ENCODE measurements at regions of chr17 and their contacts with region 1.

Region 1: GRCh38 chr17:44350733-44351226 is 5.7 kb downstream of the GRN start:
- DNase-seq: peak; percentile 55 to 82 (median 77)
- ATAC-seq: peak; percentile 80
- H3K4me3 ChIP-seq: no peak overlapping the region
- H3K4me3 Mint-ChIP-seq: no peak overlapping the region
- H3K27ac ChIP-seq: no peak overlapping the region
- H3K27ac Mint-ChIP-seq: no peak overlapping the region
- H3K4me1 ChIP-seq: peaks cover 11% of the 10 kb centered on the region
- H3K4me1 Mint-ChIP-seq: peaks cover 14% of the 10 kb centered on the region
- H3K27me3 ChIP-seq: no peaks in the 10 kb centered on the region
- H3K27me3 Mint-ChIP-seq: no peaks in the 10 kb centered on the region
- CTCF ChIP-seq: peak; percentile 72

Region 2: GRCh38 chr17:43377056-43377810 is 973.5 kb before region 1 on chr17:
- CTCF ChIA-PET with region 1: no interaction called
- POLR2A ChIA-PET with region 1: no interaction called
- intact Hi-C with region 1: no loop called
- DNase-seq: no peak
- ATAC-seq: no peak
- H3K4me3 ChIP-seq: no peak overlapping the region
- H3K4me3 Mint-ChIP-seq: no peak overlapping the region
- H3K27ac ChIP-seq: no peak overlapping the region
- H3K27ac Mint-ChIP-seq: no peak overlapping the region
- H3K4me1 ChIP-seq: no peaks in the 10 kb centered on the region
- H3K4me1 Mint-ChIP-seq: peaks cover 1% of the 10 kb centered on the region
- H3K27me3 ChIP-seq: no peaks in the 10 kb centered on the region
- H3K27me3 Mint-ChIP-seq: no peaks in the 10 kb centered on the region
- CTCF ChIP-seq: no peak

Region 3: GRCh38 chr17:43673516-43674323 is 677.1 kb before region 1 on chr17:
- CTCF ChIA-PET with region 1: no interaction called
- POLR2A ChIA-PET with region 1: no interaction called
- intact Hi-C with region 1: no loop called
- DNase-seq: peak; percentile 53 to 79 (median 72)
- ATAC-seq: peak; percentile 76
- H3K4me3 ChIP-seq: no peak overlapping the region
- H3K4me3 Mint-ChIP-seq: no peak overlapping the region
- H3K27ac ChIP-seq: no peak overlapping the region
- H3K27ac Mint-ChIP-seq: no peak overlapping the region
- H3K4me1 ChIP-seq: peaks cover 9% of the 10 kb centered on the region
- H3K4me1 Mint-ChIP-seq: peaks cover 11% of the 10 kb centered on the region
- H3K27me3 ChIP-seq: no peaks in the 10 kb centered on the region
- H3K27me3 Mint-ChIP-seq: peaks cover 2% of the 10 kb centered on the region
- CTCF ChIP-seq: peak; percentile 86

Region 4: GRCh38 chr17:43940630-43941029 is 410.1 kb before region 1 on chr17:
- CTCF ChIA-PET with region 1: interaction called, 4 read pairs
- POLR2A ChIA-PET with region 1: no interaction called
- intact Hi-C with region 1: loop called in 1 of 2 experiments (anchors 10 kb)
- DNase-seq: peak in 2 of 9 experiments; percentile 24 to 32
- ATAC-seq: no peak
- H3K4me3 ChIP-seq: no peak overlapping the region
- H3K4me3 Mint-ChIP-seq: no peak overlapping the region
- H3K27ac ChIP-seq: no peak overlapping the region
- H3K27ac Mint-ChIP-seq: no peak overlapping the region
- H3K4me1 ChIP-seq: peaks cover 12% of the 10 kb centered on the region
- H3K4me1 Mint-ChIP-seq: peaks cover 14% of the 10 kb centered on the region
- H3K27me3 ChIP-seq: no peaks in the 10 kb centered on the region
- H3K27me3 Mint-ChIP-seq: peaks cover 4% of the 10 kb centered on the region
- CTCF ChIP-seq: no peak

Region 5: DNA sequence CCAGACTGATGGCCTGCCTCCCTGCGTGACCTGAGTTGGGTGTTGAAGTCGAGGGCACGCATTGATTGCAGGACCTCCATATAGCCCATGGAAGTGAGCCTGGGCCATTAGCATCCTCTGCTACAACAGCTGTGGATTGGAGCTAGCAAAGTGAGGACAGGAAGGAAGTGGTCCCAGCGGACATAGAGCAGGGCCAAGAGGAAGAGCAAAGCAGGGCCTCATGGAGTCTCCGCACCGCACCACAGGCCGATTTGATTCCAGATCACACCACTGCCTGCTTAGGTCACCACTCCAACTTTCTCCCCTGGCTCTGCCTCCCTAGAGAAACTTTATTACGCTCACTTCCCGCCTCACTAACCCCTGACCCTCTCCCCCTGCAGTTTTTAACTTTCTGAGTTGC is 120.6 kb before region 1 on chr17:
- CTCF ChIA-PET with region 1: no interaction called
- POLR2A ChIA-PET with region 1: no interaction called
- intact Hi-C with region 1: no loop called
- DNase-seq: no peak
- ATAC-seq: no peak
- H3K4me3 ChIP-seq: no peak overlapping the region
- H3K4me3 Mint-ChIP-seq: no peak overlapping the region
- H3K27ac ChIP-seq: no peak overlapping the region
- H3K27ac Mint-ChIP-seq: no peak overlapping the region
- H3K4me1 ChIP-seq: no peaks in the 10 kb centered on the region
- H3K4me1 Mint-ChIP-seq: peaks cover 5% of the 10 kb centered on the region
- H3K27me3 ChIP-seq: no peaks in the 10 kb centered on the region
- H3K27me3 Mint-ChIP-seq: no peaks in the 10 kb centered on the region
- CTCF ChIP-seq: no peak

Region 6: GRCh38 chr17:44324571-44325275 is 26.1 kb before region 1 on chr17 and contains the start of gene SLC25A39:
- CTCF ChIA-PET with region 1: interaction called, 15 read pairs
- POLR2A ChIA-PET with region 1: interaction called, 13 read pairs
- intact Hi-C with region 1: loop called in 1 of 2 experiments (anchors 1 kb)
- DNase-seq: peak; percentile 90 to 98 (median 96)
- ATAC-seq: peak; percentile 72
- H3K4me3 ChIP-seq: peak within 1 kb of the TSS; percentile 84 to 91
- H3K4me3 Mint-ChIP-seq: peak within 1 kb of the TSS; percentile 88
- H3K27ac ChIP-seq: peak within 1 kb of the TSS; percentile 88 to 93
- H3K27ac Mint-ChIP-seq: peak within 1 kb of the TSS; percentile 96
- H3K4me1 ChIP-seq: peaks cover 14% of the 10 kb centered on the region
- H3K4me1 Mint-ChIP-seq: peaks cover 30% of the 10 kb centered on the region
- H3K27me3 ChIP-seq: no peaks in the 10 kb centered on the region
- H3K27me3 Mint-ChIP-seq: no peaks in the 10 kb centered on the region
- CTCF ChIP-seq: no peak
- total RNA-seq, gene SLC25A39: 73.1 to 77.7 TPM

Region 7: GRCh38 chr17:44331249-44331760 is 19.5 kb before region 1 on chr17:
- CTCF ChIA-PET with region 1: interaction called, 39 read pairs
- POLR2A ChIA-PET with region 1: interaction called, 13 read pairs
- intact Hi-C with region 1: loop called in 1 of 2 experiments (anchors 1 kb)
- DNase-seq: peak; percentile 45 to 85 (median 75)
- ATAC-seq: no peak
- H3K4me3 ChIP-seq: no peak overlapping the region
- H3K4me3 Mint-ChIP-seq: no peak overlapping the region
- H3K27ac ChIP-seq: no peak overlapping the region
- H3K27ac Mint-ChIP-seq: no peak overlapping the region
- H3K4me1 ChIP-seq: peaks cover 4% of the 10 kb centered on the region
- H3K4me1 Mint-ChIP-seq: peaks cover 12% of the 10 kb centered on the region
- H3K27me3 ChIP-seq: no peaks in the 10 kb centered on the region
- H3K27me3 Mint-ChIP-seq: no peaks in the 10 kb centered on the region
- CTCF ChIP-seq: peak; percentile 89

Region 8: DNA sequence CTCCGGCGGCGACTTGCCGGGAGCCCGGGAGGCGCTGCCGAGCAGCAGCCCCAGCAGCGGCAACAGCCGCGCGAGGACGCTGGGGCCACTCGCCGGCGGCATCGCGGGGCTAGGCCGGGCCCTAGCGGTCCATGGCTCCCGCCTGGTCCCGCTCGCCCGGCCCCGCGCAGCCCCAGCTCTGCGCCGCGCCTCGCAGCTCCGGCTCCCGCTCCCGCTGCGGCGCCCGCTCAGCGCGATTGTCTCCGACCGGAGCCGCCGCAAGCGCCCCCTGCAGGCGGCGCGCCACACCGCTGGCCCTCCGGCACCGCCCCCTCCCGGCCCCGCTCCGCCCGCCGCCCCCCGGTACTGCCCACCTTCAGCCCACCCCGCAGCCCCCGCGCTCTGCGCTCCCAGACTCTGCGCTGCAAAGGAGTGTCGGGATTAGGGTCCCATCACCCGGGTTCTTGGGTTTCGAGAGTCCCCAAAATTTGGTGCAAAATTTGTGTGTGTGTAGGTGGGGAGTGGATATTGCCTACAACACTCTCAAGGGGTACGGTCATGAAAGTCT is 12.9 kb after region 1 on chr17 and contains the start of gene FAM171A2:
- CTCF ChIA-PET with region 1: interaction called, 53 read pairs
- POLR2A ChIA-PET with region 1: interaction called, 10 read pairs
- intact Hi-C with region 1: loop called in 1 of 2 experiments (anchors 1 kb)
- DNase-seq: peak; percentile 44 to 86 (median 61)
- ATAC-seq: peak; percentile 92
- H3K4me3 ChIP-seq: peak within 1 kb of the TSS; percentile 51 to 59
- H3K4me3 Mint-ChIP-seq: peak within 1 kb of the TSS; percentile 80
- H3K27ac ChIP-seq: no peak within 1 kb of the TSS
- H3K27ac Mint-ChIP-seq: no peak within 1 kb of the TSS
- H3K4me1 ChIP-seq: peaks cover 3% of the 10 kb centered on the region
- H3K4me1 Mint-ChIP-seq: peaks cover 8% of the 10 kb centered on the region
- H3K27me3 ChIP-seq: peaks cover 0 to 12% of the 10 kb centered on the region in 2 experiments
- H3K27me3 Mint-ChIP-seq: peaks cover 19% of the 10 kb centered on the region
- CTCF ChIP-seq: peak; percentile 89
- total RNA-seq, gene FAM171A2: 0.24 to 0.44 TPM